WTC11 (cell line): ENCODE measurements at regions of chr3 and their contacts with region 1.

Region 1: GRCh38 chr3:138051946-138052802 is 42.2 kb downstream of the CLDN18 start:
- DNase-seq: peak; percentile 59
- ATAC-seq: peak; percentile 81
- H3K4me3 Mint-ChIP-seq: no peak overlapping the region
- H3K27ac Mint-ChIP-seq: no peak overlapping the region
- H3K4me1 Mint-ChIP-seq: peaks cover 9% of the 10 kb centered on the region
- H3K27me3 Mint-ChIP-seq: no peaks in the 10 kb centered on the region
- CTCF ChIP-seq: peak; percentile 27; the same call in 1 of the 2 replicates

Region 2: GRCh38 chr3:138009476-138010272 is 42.5 kb before region 1 on chr3 and contains the start of gene CLDN18:
- CTCF ChIA-PET with region 1: interaction called, 13 read pairs
- POLR2A ChIA-PET with region 1: no interaction called
- DNase-seq: peak; percentile 57
- ATAC-seq: peak; percentile 98
- H3K4me3 Mint-ChIP-seq: no peak within 1 kb of the TSS
- H3K27ac Mint-ChIP-seq: no peak within 1 kb of the TSS
- H3K4me1 Mint-ChIP-seq: no peaks in the 10 kb centered on the region
- H3K27me3 Mint-ChIP-seq: peaks cover 7% of the 10 kb centered on the region; the same call in 1 of the 2 replicates
- CTCF ChIP-seq: no peak
- total RNA-seq, gene CLDN18: 0.13 to 0.23 TPM (median 0.16 TPM) in 3 replicates

Region 3: GRCh38 chr3:138038722-138039462 is 13.3 kb before region 1 on chr3:
- CTCF ChIA-PET with region 1: interaction called, 12 read pairs
- POLR2A ChIA-PET with region 1: interaction called, 3 read pairs
- DNase-seq: no peak
- ATAC-seq: peak; percentile 60
- H3K4me3 Mint-ChIP-seq: no peak overlapping the region
- H3K27ac Mint-ChIP-seq: no peak overlapping the region
- H3K4me1 Mint-ChIP-seq: 0 out of 2 replicates have a peak, but pooled peaks cover 3% of the 10 kb centered on the region
- H3K27me3 Mint-ChIP-seq: no peaks in the 10 kb centered on the region
- CTCF ChIP-seq: no peak

Region 4: DNA sequence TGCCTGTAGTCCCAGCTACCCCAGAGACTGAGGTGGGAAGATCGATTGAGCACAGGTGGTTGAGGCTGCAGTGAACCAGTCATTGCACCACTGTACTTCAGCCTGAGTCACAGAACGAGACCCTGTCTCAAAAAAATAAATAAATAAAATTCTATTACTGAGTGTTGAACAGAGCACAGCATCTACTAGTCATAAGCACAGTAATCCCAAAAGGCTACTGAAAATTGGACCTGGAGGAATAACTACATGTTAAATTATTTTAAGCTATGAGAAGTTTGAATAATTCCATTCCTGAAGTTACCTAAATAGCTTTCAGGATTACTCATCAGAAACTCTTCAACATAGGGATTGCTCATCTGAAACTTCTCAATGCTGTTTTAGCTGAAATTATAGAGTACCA is 178.4 kb after region 1 on chr3:
- CTCF ChIA-PET with region 1: no interaction called
- POLR2A ChIA-PET with region 1: no interaction called
- DNase-seq: no peak
- ATAC-seq: no peak
- H3K4me3 Mint-ChIP-seq: no peak overlapping the region
- H3K27ac Mint-ChIP-seq: no peak overlapping the region
- H3K4me1 Mint-ChIP-seq: no peaks in the 10 kb centered on the region
- H3K27me3 Mint-ChIP-seq: no peaks in the 10 kb centered on the region
- CTCF ChIP-seq: no peak